ENCODE measurements at regions of chr7 and their contacts with region 1.

Region 1: GRCh38 chr7:76166404-76167255 is 35.1 kb upstream of the SRRM3 start:
- DNase-seq: peak; percentile 84 to 94 (median 91)
- H3K4me3 ChIP-seq: peak overlapping the region; percentile 72
- H3K4me3 Mint-ChIP-seq: peak overlapping the region; percentile 87 to 96 (median 90)
- H3K27ac ChIP-seq: peak overlapping the region; percentile 91
- H3K27ac Mint-ChIP-seq: peak overlapping the region; percentile 93 to 97 (median 95)
- H3K4me1 ChIP-seq: peaks cover 5% of the 10 kb centered on the region
- H3K4me1 Mint-ChIP-seq: peaks cover 3 to 5% (median 4%) of the 10 kb centered on the region in 3 donors
- H3K27me3 ChIP-seq: no peaks in the 10 kb centered on the region
- H3K27me3 Mint-ChIP-seq: no peaks in the 10 kb centered on the region

Region 2: DNA sequence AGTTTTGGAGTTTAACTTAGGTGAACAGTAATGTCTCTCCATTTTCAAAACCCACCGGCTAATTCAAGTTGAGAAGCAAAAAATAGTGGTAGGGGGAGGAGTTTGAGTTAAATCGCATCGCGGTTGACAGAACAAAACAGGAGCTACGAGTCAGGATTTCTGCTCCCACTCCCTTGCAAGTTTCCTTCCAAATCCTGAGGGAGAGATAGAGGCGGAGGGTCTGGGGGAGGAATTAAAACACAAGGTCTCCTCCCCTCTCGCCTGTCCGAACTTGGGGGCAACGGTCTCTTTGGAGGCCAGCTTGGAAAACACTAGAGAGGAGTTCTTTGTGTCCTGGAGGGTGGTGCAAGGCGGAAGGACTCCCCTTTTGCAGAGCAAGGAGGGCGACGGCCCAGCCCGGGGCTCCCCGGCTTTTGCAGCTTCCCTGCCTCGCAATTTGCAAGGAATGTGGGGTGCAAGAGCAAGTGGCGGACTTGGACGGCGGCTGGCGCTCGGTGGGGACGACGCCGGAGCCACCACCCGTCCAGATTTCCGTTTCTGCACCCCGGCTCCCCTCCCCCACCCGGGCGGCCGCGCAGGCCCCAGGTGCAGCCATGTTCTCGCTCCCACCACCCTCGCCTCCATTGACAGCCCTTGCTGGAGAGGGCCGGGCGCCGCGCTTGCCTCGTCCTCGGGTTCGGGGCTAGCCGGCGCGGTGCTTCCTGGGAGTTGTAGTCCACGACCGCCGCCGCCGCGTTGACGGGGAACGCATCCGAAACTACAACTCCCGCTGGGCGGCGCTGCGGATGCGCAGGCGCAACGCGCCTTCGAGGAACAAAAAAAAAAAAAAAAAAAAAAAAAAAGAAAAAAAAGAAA is 1509.6 kb before region 1 on chr7:
- CTCF ChIA-PET with region 1: no interaction called
- POLR2A ChIA-PET with region 1: interaction called, 15 read pairs
- DNase-seq: peak; percentile 96 to 98 (median 96)
- H3K4me3 ChIP-seq: peak overlapping the region; percentile 86
- H3K4me3 Mint-ChIP-seq: peak overlapping the region; percentile 88 to 99 (median 92)
- H3K27ac ChIP-seq: peak overlapping the region; percentile 85
- H3K27ac Mint-ChIP-seq: peak overlapping the region; percentile 72 to 98 (median 90)
- H3K4me1 ChIP-seq: peaks cover 40% of the 10 kb centered on the region
- H3K4me1 Mint-ChIP-seq: peaks cover 34 to 51% (median 50%) of the 10 kb centered on the region in 3 donors
- H3K27me3 ChIP-seq: no peaks in the 10 kb centered on the region
- H3K27me3 Mint-ChIP-seq: peaks cover 0 to 2% of the 10 kb centered on the region in 2 donors

Region 3: GRCh38 chr7:76179686-76180085 is 13.1 kb after region 1 on chr7:
- CTCF ChIA-PET with region 1: interaction called, 26 read pairs
- POLR2A ChIA-PET with region 1: no interaction called
- DNase-seq: no peak
- H3K4me3 ChIP-seq: no peak overlapping the region
- H3K4me3 Mint-ChIP-seq: no peak overlapping the region
- H3K27ac ChIP-seq: no peak overlapping the region
- H3K27ac Mint-ChIP-seq: no peak overlapping the region
- H3K4me1 ChIP-seq: no peaks in the 10 kb centered on the region
- H3K4me1 Mint-ChIP-seq: peaks cover 2 to 5% (median 4%) of the 10 kb centered on the region in 3 donors
- H3K27me3 ChIP-seq: no peaks in the 10 kb centered on the region
- H3K27me3 Mint-ChIP-seq: peaks cover 2 to 3% of the 10 kb centered on the region in 2 donors